Left lung (tissue), 14 donors: ENCODE measurements at regions of chr3 and their contacts with region 1.

Region 1: DNA sequence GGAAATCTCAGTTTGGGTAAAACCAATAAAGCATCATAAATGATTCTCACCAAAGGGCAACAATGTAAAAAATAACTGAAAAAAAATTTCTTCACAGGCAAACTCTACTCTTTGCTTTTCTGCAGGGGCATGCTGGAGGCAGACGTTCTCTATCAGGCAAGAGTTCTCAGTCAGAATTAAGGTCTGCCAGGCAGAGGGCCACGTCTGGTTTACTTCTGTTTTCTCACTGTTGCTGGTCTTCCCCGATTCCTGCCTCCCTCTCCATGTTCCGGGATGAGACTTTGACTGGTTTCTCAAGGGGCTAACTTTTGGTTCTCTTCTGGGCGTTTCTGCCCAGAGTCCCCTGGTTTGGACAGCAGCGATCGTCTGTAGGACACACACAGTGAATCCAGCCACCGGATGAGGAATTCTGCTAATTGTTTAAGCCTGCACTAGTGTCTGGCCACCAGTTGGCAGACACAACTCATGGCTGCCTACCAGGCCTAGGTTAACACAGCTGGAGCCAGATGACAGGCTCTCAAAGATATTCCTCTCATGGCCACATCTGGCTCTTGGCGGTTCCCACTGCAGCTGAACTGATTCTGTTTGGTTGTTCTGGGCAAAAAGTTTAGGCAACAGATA is 273.1 kb downstream of the FOXP1 start:
- DNase-seq: peak in 1 of 4 donors; percentile 26
- ATAC-seq: no peak
- H3K4me3 ChIP-seq: no peak overlapping the region
- H3K27ac ChIP-seq: peak overlapping the region in 1 of 2 donors; percentile 13
- H3K4me1 ChIP-seq: peaks cover 0 to 32% of the 10 kb centered on the region in 2 donors
- H3K27me3 ChIP-seq: no peaks in the 10 kb centered on the region
- CTCF ChIP-seq: no peak

Region 2: DNA sequence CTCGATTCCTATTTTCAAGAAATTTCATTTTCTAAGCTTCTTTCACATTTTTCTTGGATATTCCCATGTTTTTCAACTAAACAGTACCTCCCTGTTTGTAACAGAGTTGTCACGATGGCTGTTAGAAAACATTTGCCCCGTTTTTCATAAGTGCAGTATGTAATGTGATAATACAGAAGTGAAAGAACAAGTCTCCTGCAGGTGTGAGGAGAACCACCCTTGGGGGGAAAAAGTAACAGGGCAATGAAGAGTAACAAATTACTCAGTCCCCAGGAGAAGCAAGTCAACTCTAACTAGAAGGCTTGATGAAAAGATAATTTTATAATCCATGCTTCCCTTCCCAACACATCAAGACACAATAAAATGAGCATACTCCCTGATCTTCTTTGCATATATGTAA is 220.3 kb before region 1 on chr3:
- intact Hi-C with region 1: no loop called
- DNase-seq: no peak
- ATAC-seq: no peak
- H3K4me3 ChIP-seq: no peak overlapping the region
- H3K27ac ChIP-seq: no peak overlapping the region
- H3K4me1 ChIP-seq: peaks cover 0 to 16% of the 10 kb centered on the region in 2 donors
- H3K27me3 ChIP-seq: no peaks in the 10 kb centered on the region
- CTCF ChIP-seq: no peak

Region 3: DNA sequence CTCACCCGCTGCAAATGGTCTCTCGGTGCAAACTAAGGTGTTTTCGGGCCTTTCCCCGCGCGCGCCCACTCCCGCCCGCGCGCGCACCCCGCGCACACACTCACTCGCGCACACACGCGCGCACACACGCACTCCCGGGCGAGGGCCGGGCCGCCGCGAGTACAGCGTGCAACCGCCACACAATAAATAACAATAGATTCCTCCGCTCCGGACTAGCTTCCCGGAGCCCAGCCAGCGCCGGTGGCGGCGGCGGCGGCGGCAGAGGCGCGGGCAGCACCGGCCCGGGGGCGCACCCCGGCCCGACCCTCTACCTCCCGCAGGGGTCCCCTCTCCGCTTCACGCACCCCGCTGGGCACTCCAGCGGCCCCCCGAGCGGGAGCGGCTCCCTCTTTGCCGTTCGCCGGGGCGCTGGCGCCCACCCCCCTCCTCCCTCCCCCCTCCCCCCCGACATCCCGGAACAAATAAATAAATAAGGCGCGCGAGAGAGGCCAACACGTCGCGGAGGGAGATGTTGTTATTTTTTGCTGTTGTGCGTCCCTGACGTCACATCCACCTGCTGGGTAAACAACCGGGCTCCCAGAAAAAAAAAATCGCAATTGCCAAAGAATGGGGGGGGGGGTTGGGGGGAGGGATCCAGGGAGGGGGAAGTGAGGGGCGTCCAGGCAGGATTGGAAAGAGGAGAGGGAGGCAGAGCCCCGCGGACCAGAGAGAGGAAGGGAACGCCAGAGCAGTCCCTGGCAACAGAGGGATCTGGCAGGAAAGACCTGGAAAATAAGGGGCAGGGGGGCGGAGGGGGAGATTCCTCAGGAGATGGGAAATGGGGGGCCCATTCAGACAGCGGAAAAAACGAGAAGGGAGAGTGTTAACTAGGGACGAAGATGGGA is 273.3 kb after region 1 on chr3 and contains the start of gene FOXP1:
- intact Hi-C with region 1: loop called in 1 of 2 experiments (anchors 10 kb)
- DNase-seq: peak; percentile 62 to 92 (median 76)
- ATAC-seq: peak; percentile 63
- H3K4me3 ChIP-seq: peak within 1 kb of the TSS; percentile 77 to 86
- H3K27ac ChIP-seq: peak within 1 kb of the TSS; percentile 95 to 98
- H3K4me1 ChIP-seq: peaks cover 5 to 48% of the 10 kb centered on the region in 2 donors
- H3K27me3 ChIP-seq: no peaks in the 10 kb centered on the region
- CTCF ChIP-seq: no peak
- polyA plus RNA-seq, gene FOXP1: 114 to 143 (median 129) TPM

Region 4: DNA sequence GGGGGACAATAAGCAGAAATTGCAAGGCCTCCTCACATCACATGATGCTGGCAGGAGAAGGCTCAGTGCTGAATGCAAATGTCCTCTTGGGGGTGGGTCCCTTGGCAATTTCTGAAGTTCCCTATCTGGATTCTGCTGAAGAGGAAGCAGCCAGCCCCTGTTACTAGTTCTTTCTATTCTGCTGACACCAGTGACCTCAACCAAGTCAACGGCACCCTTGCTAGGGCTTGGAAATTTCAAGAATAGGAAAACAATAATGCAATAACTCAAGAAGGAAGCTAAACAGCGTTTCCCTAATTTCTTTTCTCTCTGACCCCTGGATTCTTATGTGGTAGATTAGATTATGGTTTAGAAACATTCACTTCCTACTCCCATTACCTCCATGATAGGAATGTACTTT is 319.2 kb after region 1 on chr3:
- intact Hi-C with region 1: no loop called
- DNase-seq: peak in 1 of 4 donors; percentile 64
- ATAC-seq: peak; percentile 80
- H3K4me3 ChIP-seq: no peak overlapping the region
- H3K27ac ChIP-seq: peak overlapping the region; percentile 42 to 68
- H3K4me1 ChIP-seq: peaks cover 0 to 3% of the 10 kb centered on the region in 2 donors
- H3K27me3 ChIP-seq: no peaks in the 10 kb centered on the region
- CTCF ChIP-seq: no peak